Calu3 (cell line): ENCODE measurements at regions of chr12 and their contacts with region 1.

Region 1: GRCh38 chr12:91178139-91178561 is 4.5 kb downstream of the DCN start:
- DNase-seq: no peak
- H3K4me3 Mint-ChIP-seq: no peak overlapping the region
- H3K27ac Mint-ChIP-seq: no peak overlapping the region
- H3K4me1 Mint-ChIP-seq: no peaks in the 10 kb centered on the region
- H3K27me3 Mint-ChIP-seq: no peaks in the 10 kb centered on the region
- CTCF ChIP-seq: peak; percentile 19

Region 2: GRCh38 chr12:90978117-90978770 is 199.9 kb before region 1 on chr12:
- CTCF ChIA-PET with region 1: no interaction called
- intact Hi-C with region 1: loop called (anchors 5 kb)
- DNase-seq: no peak
- H3K4me3 Mint-ChIP-seq: no peak overlapping the region
- H3K27ac Mint-ChIP-seq: no peak overlapping the region
- H3K4me1 Mint-ChIP-seq: peaks cover 25% of the 10 kb centered on the region
- H3K27me3 Mint-ChIP-seq: no peaks in the 10 kb centered on the region
- CTCF ChIP-seq: peak; percentile 60

Region 3: DNA sequence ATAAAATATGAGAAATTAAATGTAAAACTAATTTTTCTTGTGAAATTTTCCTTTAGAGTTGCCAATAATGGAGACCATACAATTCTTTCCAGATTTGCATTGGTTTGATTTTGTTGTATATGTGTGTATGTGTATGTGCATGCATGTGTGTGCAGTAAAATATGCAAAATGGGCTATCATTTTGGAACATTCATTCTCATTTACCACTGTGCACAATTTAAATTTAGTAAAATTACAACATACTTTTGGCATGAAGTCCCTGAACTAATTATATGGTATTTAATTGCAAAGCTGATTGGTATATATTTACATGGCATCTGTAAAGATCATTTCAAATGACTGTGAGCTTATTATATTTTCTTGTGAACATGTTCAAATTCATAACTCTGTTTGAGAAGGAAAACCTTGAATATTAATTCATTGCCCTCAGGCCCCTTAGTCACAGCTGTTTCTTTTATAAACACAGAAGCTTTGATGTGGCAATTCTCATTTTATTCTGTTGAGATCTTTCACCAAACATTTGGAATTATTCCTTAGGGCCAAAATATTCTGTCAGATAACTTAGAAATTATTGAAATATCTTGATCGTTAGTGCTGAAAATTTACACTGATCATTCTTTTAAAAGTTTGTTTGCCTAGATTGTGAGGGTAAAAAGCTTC is 137.9 kb before region 1 on chr12:
- CTCF ChIA-PET with region 1: no interaction called
- intact Hi-C with region 1: no loop called
- DNase-seq: no peak
- H3K4me3 Mint-ChIP-seq: no peak overlapping the region
- H3K27ac Mint-ChIP-seq: no peak overlapping the region
- H3K4me1 Mint-ChIP-seq: no peaks in the 10 kb centered on the region
- H3K27me3 Mint-ChIP-seq: no peaks in the 10 kb centered on the region
- CTCF ChIP-seq: no peak

Region 4: GRCh38 chr12:91053951-91054715 is 124.0 kb before region 1 on chr12:
- CTCF ChIA-PET with region 1: no interaction called
- intact Hi-C with region 1: loop called (anchors 1 kb)
- DNase-seq: no peak
- H3K4me3 Mint-ChIP-seq: no peak overlapping the region
- H3K27ac Mint-ChIP-seq: no peak overlapping the region
- H3K4me1 Mint-ChIP-seq: no peaks in the 10 kb centered on the region
- H3K27me3 Mint-ChIP-seq: no peaks in the 10 kb centered on the region
- CTCF ChIP-seq: no peak

Region 5: GRCh38 chr12:91326058-91327027 is 148.2 kb after region 1 on chr12:
- CTCF ChIA-PET with region 1: interaction called, 7 read pairs
- intact Hi-C with region 1: loop called (anchors 1 kb)
- DNase-seq: peak; percentile 70
- H3K4me3 Mint-ChIP-seq: no peak overlapping the region
- H3K27ac Mint-ChIP-seq: no peak overlapping the region
- H3K4me1 Mint-ChIP-seq: no peaks in the 10 kb centered on the region
- H3K27me3 Mint-ChIP-seq: no peaks in the 10 kb centered on the region
- CTCF ChIP-seq: peak; percentile 67

Region 6: GRCh38 chr12:91355150-91356006 is 177.2 kb after region 1 on chr12:
- CTCF ChIA-PET with region 1: no interaction called
- intact Hi-C with region 1: loop called (anchors 1 kb)
- DNase-seq: peak; percentile 73
- H3K4me3 Mint-ChIP-seq: no peak overlapping the region
- H3K27ac Mint-ChIP-seq: no peak overlapping the region
- H3K4me1 Mint-ChIP-seq: peaks cover 27% of the 10 kb centered on the region
- H3K27me3 Mint-ChIP-seq: no peaks in the 10 kb centered on the region
- CTCF ChIP-seq: peak; percentile 74